Activated CD4-positive, alpha-beta T cell treated with anti-CD3 and anti-CD28 coated beads for 36 hours (primary cell): ENCODE measurements at regions of chrX and their contacts with region 1.

Region 1: DNA sequence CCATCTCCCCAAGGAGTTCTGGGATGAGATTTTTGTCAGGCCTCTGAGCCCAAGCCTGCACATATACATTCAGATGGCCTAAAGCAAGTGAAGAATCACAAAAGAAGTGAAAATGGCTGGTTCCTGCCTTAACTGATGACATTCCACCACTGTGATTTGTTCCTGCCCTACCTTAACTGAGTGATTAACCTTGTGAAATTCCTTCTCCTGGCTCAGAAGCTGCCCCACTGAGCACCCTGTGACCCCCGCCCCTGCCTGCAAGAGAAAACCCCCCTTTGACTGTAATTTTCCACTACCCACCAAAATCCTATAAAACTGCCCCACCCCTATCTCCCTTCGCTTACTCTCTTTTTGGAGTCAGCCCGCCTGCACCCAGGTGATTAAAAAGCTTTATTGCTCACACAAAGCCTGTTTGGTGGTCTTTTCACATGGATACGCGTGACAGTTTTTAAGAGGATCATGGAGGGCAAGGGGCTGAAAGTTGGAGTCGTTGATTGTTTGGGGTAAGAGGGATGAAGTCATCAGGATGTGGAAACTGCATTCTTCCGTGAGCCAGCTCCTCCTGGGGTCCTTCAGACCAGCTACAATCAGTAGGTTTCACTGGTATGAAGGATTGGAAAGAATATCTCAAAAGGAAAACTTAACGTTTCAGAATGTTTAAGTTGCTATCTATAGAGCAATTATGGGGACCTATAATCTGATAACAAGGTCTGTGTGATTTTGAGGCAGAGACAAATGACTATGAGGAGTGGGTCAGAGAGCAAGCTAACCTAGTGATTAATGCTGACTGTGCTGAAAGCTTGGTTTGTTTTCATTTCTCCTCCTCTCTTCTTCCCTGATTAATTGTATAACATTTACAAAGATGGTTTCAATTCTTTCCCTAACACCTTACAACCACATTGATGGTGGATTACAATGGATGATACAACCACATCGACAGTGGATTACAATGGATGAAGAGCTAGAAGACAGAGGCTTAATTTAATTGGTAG is 28.6 kb upstream of the MAGEA11 start:
- DNase-seq: no peak
- ATAC-seq: no peak
- H3K4me3 Mint-ChIP-seq: no peak overlapping the region
- H3K27ac Mint-ChIP-seq: no peak overlapping the region
- H3K4me1 Mint-ChIP-seq: no peaks in the 10 kb centered on the region
- H3K27me3 Mint-ChIP-seq: peaks cover 2% of the 10 kb centered on the region

Region 2: GRCh38 chrX:149611623-149612175 is 71.6 kb before region 1 on chrX:
- CTCF ChIA-PET with region 1: no interaction called
- POLR2A ChIA-PET with region 1: no interaction called
- intact Hi-C with region 1: no loop called
- DNase-seq: no peak
- ATAC-seq: no peak
- H3K4me3 Mint-ChIP-seq: no peak overlapping the region
- H3K27ac Mint-ChIP-seq: no peak overlapping the region
- H3K4me1 Mint-ChIP-seq: no peaks in the 10 kb centered on the region
- H3K27me3 Mint-ChIP-seq: no peaks in the 10 kb centered on the region

Region 3: DNA sequence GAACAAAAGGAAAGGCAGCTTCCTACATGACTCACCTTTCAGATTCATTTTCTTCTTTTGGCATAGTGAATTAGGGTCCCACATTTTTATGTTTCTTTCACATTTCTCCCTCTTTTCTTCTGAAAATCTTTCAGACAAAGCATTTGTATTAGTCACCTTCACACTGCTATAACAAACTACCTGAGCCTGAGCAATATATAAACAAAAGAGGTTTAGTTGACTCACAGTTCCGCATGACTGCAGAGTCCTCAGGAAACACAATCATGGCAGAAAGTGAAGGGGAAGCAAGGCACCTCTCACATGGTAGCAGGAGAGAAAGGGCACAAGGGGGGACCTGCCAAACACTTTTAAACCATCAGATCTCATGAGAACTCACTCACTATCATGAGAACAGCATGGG is 135.4 kb after region 1 on chrX:
- CTCF ChIA-PET with region 1: no interaction called
- POLR2A ChIA-PET with region 1: no interaction called
- intact Hi-C with region 1: loop called in 1 of 2 experiments (anchors 10 kb)
- DNase-seq: no peak
- ATAC-seq: peak; percentile 69
- H3K4me3 Mint-ChIP-seq: no peak overlapping the region
- H3K27ac Mint-ChIP-seq: no peak overlapping the region
- H3K4me1 Mint-ChIP-seq: peaks cover 7% of the 10 kb centered on the region
- H3K27me3 Mint-ChIP-seq: peaks cover 8% of the 10 kb centered on the region